ENCODE measurements at regions of chr6 and their contacts with region 1.

Region 1: DNA sequence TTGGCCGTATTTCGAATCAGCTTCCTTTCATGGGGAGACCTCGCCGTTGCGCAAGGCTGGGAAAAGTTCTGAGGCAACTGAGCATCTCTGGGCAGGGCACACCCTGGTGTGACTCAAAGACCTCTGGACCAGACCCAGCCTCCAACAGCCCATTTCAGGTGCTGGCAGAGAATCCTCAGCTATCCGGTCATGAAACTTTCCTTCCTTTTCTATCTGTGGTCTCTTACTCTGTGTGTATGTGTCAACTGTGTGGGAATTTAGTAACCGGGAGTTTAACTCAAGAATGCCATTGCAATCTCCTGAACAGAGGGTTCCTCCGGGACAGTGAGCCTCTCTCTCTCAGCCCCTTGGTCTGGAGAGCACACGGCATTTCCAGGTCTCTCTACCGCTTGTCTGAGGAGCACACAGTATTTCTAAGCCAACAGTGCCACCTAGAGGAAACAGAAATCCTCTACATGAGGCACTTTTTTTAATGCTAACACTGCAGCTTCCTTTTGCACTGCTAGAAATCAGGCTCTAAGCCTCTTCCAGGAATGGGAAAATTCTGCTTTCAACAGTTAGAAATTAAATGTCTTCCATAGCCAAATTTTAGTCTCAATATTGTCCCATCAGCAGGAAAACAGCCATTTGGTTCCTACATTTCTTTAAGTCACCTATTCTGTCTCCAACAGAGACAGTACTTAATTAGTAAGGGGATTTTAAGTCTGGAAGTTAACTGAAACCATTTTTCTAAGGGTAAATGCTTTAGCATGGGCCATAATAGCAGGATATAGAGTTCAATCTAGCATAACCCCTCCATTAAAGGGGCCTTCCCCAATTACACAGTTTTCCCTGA is 32.7 kb downstream of the PLN start:
- DNase-seq: peak; percentile 19
- ATAC-seq: peak; percentile 77
- H3K4me3 Mint-ChIP-seq: no peak overlapping the region
- H3K27ac Mint-ChIP-seq: peak overlapping the region; percentile 80
- H3K4me1 Mint-ChIP-seq: no peaks in the 10 kb centered on the region
- H3K27me3 Mint-ChIP-seq: no peaks in the 10 kb centered on the region

Region 2: GRCh38 chr6:118542184-118542952 is 38.4 kb before region 1 on chr6:
- CTCF ChIA-PET with region 1: no interaction called
- POLR2A ChIA-PET with region 1: no interaction called
- intact Hi-C with region 1: no loop called
- DNase-seq: no peak
- ATAC-seq: no peak
- H3K4me3 Mint-ChIP-seq: no peak overlapping the region
- H3K27ac Mint-ChIP-seq: no peak overlapping the region
- H3K4me1 Mint-ChIP-seq: peaks cover 33% of the 10 kb centered on the region
- H3K27me3 Mint-ChIP-seq: no peaks in the 10 kb centered on the region

Region 3: GRCh38 chr6:118602300-118602699 is 21.5 kb after region 1 on chr6:
- CTCF ChIA-PET with region 1: interaction called, 15 read pairs
- POLR2A ChIA-PET with region 1: no interaction called
- intact Hi-C with region 1: no loop called
- DNase-seq: no peak
- ATAC-seq: no peak
- H3K4me3 Mint-ChIP-seq: no peak overlapping the region
- H3K27ac Mint-ChIP-seq: no peak overlapping the region
- H3K4me1 Mint-ChIP-seq: peaks cover 32% of the 10 kb centered on the region
- H3K27me3 Mint-ChIP-seq: no peaks in the 10 kb centered on the region

Region 4: DNA sequence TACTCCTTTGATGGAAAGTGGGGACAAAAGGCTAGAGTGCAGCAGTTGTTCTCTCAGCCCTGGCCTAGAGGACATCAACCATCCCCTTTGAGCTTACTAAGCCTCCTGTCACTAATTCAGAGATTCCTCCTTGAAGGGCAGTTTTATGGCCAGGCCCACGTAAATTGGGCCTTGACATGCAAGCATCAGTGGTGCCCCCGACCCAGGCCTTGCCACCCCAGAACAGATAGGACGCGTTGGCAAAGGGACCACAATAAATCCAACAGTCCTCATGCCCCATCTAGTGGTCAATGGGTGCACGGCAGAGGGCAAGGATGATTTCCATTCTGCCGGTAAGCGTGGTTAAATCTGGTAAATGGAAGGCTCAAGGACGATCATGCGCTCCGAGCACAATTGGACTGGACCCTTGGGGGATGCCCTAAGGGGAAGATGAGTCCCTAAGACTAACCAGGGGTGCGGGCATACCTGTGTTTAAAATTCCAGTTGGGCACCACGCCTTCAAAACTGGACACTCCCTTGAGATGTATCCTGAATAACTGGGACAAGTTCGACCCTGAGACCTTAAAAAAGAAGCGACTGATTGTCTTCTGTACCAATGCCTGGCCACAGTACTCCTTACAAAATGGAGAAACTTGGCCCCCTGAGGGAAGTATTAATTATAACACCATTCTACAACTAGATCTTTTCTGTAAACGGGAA is 38.0 kb after region 1 on chr6:
- CTCF ChIA-PET with region 1: interaction called, 10 read pairs
- POLR2A ChIA-PET with region 1: no interaction called
- intact Hi-C with region 1: no loop called
- DNase-seq: peak; percentile 78
- ATAC-seq: peak; percentile 94
- H3K4me3 Mint-ChIP-seq: no peak overlapping the region
- H3K27ac Mint-ChIP-seq: no peak overlapping the region
- H3K4me1 Mint-ChIP-seq: peaks cover 39% of the 10 kb centered on the region
- H3K27me3 Mint-ChIP-seq: no peaks in the 10 kb centered on the region

Region 5: GRCh38 chr6:118825661-118826060 is 244.9 kb after region 1 on chr6:
- CTCF ChIA-PET with region 1: no interaction called
- POLR2A ChIA-PET with region 1: no interaction called
- intact Hi-C with region 1: no loop called
- DNase-seq: no peak
- ATAC-seq: no peak
- H3K4me3 Mint-ChIP-seq: no peak overlapping the region
- H3K27ac Mint-ChIP-seq: no peak overlapping the region
- H3K4me1 Mint-ChIP-seq: peaks cover 4% of the 10 kb centered on the region
- H3K27me3 Mint-ChIP-seq: no peaks in the 10 kb centered on the region

Measured in activated CD4-positive, alpha-beta T cell treated with anti-CD3 and anti-CD28 coated beads for 36 hours (primary cell).